BJ (cell line): ENCODE measurements at regions of chr18 and their contacts with region 1.

Region 1: DNA sequence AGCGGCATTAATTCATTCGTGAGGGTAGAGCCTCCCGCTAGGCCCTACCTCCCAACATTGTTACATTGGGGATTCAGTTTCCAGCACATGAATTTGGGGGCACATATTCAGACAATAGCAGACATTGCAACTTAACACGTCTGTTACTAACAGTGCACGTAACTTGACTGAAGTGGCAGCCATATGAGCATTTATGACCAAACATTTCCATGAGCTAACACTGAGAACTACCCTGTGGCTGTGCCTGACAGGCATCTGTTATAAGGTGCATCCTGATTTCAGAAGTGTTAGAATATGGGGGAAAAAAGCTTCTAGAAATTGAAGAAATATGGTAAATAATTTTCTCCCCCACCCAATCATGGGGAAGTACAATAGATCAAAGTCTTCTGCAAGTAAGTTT is 24.5 kb downstream of the MALT1 start:
- DNase-seq: no peak
- H3K4me3 ChIP-seq: no peak overlapping the region
- H3K27me3 ChIP-seq: no peaks in the 10 kb centered on the region
- CTCF ChIP-seq: no peak

Region 2: DNA sequence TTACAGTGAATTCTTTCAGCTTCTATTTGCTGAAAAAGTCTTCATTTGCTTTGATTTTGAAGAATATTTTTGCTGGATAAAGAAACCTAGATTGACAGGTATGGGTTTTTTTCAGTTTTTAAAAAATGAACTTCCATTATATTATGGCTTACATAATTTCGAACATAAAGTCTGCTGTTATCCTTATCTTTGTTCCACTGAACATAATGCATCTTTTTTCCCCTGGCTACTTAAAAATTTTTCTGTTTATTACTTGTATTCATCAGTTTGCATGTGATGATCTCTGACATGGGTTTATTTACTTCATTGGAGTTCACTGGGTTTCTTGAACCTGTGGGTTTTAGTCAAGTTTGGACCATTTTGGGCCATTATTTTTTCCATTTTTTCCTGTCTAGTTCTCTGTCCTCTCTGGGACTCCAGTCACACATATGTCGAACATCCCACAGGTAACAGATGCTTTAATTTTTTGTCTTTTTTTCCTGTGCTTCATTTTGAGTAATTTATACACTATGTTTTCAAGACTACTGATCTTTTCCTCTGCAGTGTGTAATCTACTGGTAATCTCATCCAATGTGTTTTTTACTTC is 477.0 kb after region 1 on chr18:
- CTCF ChIA-PET with region 1: no interaction called
- POLR2A ChIA-PET with region 1: interaction called, 12 read pairs
- DNase-seq: no peak
- H3K4me3 ChIP-seq: no peak overlapping the region
- H3K27me3 ChIP-seq: peaks cover 5% of the 10 kb centered on the region
- CTCF ChIP-seq: no peak